Breast epithelium (tissue), 4 donors: ENCODE measurements at regions of chr3 and their contacts with region 1.

Region 1: GRCh38 chr3:174815429-174816149 is 43.5 kb upstream of the NAALADL2 start:
- DNase-seq: no peak
- H3K4me3 ChIP-seq: no peak overlapping the region
- H3K27ac ChIP-seq: no peak overlapping the region
- H3K4me1 ChIP-seq: no peaks in the 10 kb centered on the region
- H3K27me3 ChIP-seq: no peaks in the 10 kb centered on the region
- CTCF ChIP-seq: no peak
- POLR2A ChIP-seq: no peak

Region 2: DNA sequence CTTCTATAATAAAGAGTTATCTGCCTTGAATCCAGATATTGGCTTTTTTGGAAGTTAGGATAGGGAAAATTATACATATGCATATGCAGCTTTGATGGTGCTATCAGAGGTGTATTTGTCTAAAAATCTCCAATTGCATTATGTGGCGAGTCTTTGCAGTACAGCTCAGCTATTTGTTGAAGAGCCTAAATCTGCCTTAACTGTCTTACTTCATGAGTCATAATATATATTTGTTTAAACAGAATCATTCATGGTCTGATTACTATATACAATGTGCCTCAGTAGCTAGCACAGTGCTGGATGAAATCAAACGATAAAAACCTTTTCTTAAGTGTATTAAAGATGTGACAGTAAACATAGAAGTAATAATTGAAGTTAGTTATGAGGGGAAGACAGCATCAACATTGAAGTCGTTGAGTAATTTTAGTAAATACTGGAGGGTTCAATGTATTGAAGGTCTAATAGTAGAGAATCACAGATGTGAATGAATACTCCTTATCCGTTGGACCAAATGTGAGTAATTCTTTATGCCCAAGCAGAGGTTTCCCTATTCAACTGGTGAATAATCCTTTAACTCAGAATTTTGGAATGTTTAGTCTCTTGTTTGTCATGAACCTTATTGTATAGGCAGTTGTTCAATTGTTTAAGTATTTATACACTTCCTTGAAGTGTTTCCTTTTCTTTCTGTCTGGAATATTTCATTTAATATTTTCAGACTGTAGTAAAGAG is 31.2 kb before region 1 on chr3:
- intact Hi-C with region 1: no loop called
- DNase-seq: no peak
- H3K4me3 ChIP-seq: no peak overlapping the region
- H3K27ac ChIP-seq: no peak overlapping the region
- H3K4me1 ChIP-seq: no peaks in the 10 kb centered on the region
- H3K27me3 ChIP-seq: no peaks in the 10 kb centered on the region
- CTCF ChIP-seq: no peak
- POLR2A ChIP-seq: no peak

Region 3: DNA sequence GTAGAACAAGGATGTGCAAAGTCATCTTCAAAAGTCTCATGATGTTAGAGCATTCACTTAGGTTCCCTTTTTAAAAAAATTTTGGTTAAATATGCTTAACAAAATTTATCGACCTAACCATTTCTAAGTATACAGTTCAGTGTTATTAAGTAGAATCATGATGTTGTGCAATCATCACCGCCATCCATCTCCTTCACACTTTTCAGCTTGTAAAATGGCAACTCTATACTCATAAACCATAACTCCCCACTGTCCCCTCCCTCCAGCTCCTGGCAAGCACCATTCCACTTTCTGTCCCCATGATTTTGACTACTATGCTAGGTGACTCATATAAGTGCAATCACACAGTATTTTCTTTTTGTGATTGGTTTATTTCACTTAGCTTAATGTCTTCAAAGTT is 1486.7 kb after region 1 on chr3:
- intact Hi-C with region 1: loop called (anchors 5 kb)
- DNase-seq: no peak
- H3K4me3 ChIP-seq: no peak overlapping the region
- H3K27ac ChIP-seq: no peak overlapping the region
- H3K4me1 ChIP-seq: no peaks in the 10 kb centered on the region
- H3K27me3 ChIP-seq: no peaks in the 10 kb centered on the region
- CTCF ChIP-seq: no peak
- POLR2A ChIP-seq: no peak